ENCODE measurements at regions of chr2 and their contacts with region 1.

Region 1: DNA sequence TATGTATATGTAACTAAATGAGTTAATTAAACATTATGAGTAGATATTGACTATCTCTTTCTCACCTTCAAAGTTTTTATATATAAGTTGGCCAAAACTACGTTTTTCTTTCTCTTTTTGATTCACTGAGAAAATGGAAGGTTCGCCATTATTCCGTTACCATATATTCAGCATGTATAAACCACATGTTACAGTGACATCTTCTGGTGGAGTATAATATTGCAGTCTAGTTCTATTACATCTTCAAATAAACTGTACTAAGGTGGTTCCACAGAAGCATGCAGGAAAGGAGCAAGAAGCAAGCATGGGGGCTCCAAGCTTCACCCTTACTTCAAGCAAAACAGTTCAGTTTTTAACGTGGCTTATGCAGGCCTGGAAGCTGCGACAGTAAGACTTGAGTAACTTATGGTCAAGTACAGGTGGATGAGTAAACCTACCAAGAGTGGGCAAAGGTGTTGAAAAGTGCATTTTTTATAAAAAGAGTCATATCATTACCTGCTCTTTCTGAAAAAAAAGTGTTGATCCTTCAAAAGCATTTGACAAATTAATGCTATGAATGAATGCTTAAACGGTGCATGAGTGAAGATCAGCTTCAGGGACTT is 129.8 kb upstream of the RAB6C start:
- ATAC-seq: peak in 6 of 8 experiments; percentile 38 to 74 (median 52)
- H3K4me3 ChIP-seq: no peak overlapping the region
- H3K27ac ChIP-seq: no peak overlapping the region
- H3K4me1 ChIP-seq: no peaks in the 10 kb centered on the region

Region 2: DNA sequence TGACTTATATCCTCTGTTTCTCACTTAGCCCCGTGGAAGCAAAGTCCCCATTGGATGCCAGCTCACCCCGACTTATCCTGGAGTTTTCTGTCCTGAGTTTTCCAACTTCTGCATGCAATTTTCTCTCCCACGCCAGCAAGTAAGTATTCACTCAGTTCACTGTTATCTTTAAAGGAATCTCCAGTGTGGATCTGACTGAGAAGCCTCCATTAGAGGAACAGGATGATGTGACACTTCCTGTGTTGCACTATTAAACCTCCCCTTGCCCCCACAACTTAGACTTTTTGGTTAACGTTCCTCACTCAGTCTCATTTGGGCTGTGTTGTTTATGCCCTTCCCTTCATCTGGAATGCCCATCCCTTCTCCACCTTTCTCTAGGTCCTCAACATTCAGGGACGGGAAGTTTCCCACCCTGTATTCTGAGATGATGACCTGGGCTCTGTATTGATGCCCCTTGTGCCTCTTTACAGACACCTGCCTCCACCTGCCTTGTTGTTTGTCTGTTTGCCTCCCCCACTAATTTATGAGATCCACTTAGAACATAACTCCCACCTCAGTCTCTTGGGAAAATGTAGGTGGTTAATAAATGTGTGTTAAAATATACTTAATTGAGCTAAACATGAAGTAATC is 406.3 kb before region 1 on chr2:
- in situ Hi-C with region 1: loop called in 1 of 9 experiments (anchors 25 kb)
- ATAC-seq: peak in 2 of 8 experiments; percentile 29 to 59
- H3K4me3 ChIP-seq: no peak overlapping the region
- H3K27ac ChIP-seq: no peak overlapping the region
- H3K4me1 ChIP-seq: peaks cover 5 to 16% of the 10 kb centered on the region in 2 donors

Region 3: DNA sequence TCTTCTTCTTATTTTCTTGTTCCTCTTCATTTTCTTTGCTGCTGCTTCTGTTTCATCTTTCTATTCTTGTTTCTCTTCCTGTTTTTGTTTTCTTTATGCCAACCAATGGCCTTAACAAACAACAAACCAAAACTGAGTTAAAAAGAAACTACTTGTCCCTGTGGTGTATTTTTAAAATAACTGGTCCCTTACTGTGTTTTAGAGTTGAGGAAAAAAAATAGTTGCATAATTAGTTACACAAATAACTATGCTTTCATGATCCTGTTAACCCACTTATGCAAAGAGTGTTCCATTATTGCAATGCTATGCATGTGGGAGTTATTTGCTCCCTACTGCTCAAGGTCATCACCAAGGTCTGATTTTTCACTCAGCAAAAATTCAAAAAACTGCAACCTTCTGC is 453.5 kb after region 1 on chr2:
- in situ Hi-C with region 1: no loop called
- ATAC-seq: no peak
- H3K4me3 ChIP-seq: no peak overlapping the region
- H3K27ac ChIP-seq: no peak overlapping the region
- H3K4me1 ChIP-seq: no peaks in the 10 kb centered on the region